GM12878 (cell line): ENCODE measurements at regions of chr5 and their contacts with region 1.

Region 1: DNA sequence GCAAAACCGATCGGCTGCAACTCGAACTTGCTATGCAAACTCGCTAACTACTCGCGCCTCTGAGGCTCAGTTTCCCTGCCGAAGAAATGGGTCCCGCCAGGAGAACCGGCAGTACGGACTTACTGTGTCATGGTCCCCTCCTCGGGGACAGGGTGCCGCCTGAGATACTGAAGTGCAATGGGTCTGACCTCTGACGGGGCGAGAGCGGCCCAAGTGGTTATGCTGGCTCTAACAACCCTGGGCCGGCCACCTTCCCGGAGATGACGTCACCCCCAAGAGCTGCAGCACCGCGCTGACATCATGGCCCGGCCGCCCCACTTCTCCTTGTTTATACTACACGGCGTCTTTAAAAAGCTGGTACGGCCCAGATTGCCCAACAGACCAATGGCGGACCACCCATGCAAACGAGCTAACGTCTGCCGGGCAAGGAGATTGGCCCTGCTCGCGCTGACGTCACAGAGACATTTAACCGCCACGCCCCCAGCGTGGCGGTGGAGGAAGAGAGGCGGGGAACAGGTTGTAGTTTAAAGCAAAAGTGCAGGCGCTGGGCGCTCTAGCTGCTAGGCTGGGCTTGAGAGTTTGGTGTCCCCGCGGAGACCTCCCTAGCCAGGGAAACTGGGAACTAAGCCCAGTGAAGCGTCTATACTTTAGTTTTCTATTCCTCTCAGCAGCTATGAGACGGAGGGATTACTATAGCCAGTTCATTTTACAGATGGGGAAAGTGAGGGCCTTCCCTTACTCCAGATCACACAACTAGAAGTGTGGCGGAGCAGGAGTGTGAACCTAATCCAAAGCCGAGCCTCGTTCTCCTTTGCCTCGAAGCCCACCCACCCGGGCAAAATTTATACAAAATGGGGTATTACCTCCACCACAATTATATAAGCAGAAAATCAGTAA is 654 bp upstream of the RNF44 start:
- DNase-seq: peak; percentile 94
- ATAC-seq: peak; percentile 80
- H3K4me3 ChIP-seq: peak overlapping the region; percentile 99
- H3K27ac ChIP-seq: peak overlapping the region; percentile 95
- H3K4me1 ChIP-seq: peaks cover 38% of the 10 kb centered on the region
- H3K27me3 ChIP-seq: no peaks in the 10 kb centered on the region
- CTCF ChIP-seq: no peak
- EP300 ChIP-seq: no peak
- POLR2A ChIP-seq: no peak
- RAD21 ChIP-seq: no peak

Region 2: GRCh38 chr5:176361437-176362232 is 176.2 kb before region 1 on chr5 and contains the start of gene KIAA1191:
- CTCF ChIA-PET with region 1: interaction called, 4 read pairs
- POLR2A ChIA-PET with region 1: interaction called, 16 read pairs
- RAD21 ChIA-PET with region 1: interaction called, 7 read pairs
- SMC1A ChIA-PET with region 1: no interaction called
- in situ Hi-C with region 1: no loop called
- intact Hi-C with region 1: no loop called
- DNase-seq: peak; percentile 83
- ATAC-seq: peak; percentile 95
- H3K4me3 ChIP-seq: peak within 1 kb of the TSS; percentile 85
- H3K27ac ChIP-seq: peak within 1 kb of the TSS; percentile 81
- H3K4me1 ChIP-seq: no peaks in the 10 kb centered on the region; the same call in 1 of the 2 replicates
- H3K27me3 ChIP-seq: no peaks in the 10 kb centered on the region
- CTCF ChIP-seq: peak; percentile 10 to 51 (median 31); a peak in 3 of 6 replicates
- EP300 ChIP-seq: no peak
- POLR2A ChIP-seq: peak; percentile 100
- RAD21 ChIP-seq: peak; percentile 29; the same call in 1 of the 2 replicates
- polyA plus RNA-seq, gene KIAA1191: 14.9 to 16.3 TPM

Region 3: GRCh38 chr5:176388444-176389134 is 149.3 kb before region 1 on chr5 and contains the starts of genes HIGD2A and NOP16:
- CTCF ChIA-PET with region 1: no interaction called
- POLR2A ChIA-PET with region 1: interaction called, 5 read pairs
- RAD21 ChIA-PET with region 1: interaction called, 6 read pairs
- SMC1A ChIA-PET with region 1: no interaction called
- in situ Hi-C with region 1: no loop called
- intact Hi-C with region 1: loop called (anchors 10 kb)
- DNase-seq: peak; percentile 97
- ATAC-seq: peak; percentile 91
- H3K4me3 ChIP-seq: peak within 1 kb of the TSS; percentile 90
- H3K27ac ChIP-seq: peak within 1 kb of the TSS; percentile 97
- H3K4me1 ChIP-seq: peaks cover 11% of the 10 kb centered on the region
- H3K27me3 ChIP-seq: no peaks in the 10 kb centered on the region
- CTCF ChIP-seq: no peak
- EP300 ChIP-seq: no peak
- POLR2A ChIP-seq: peak; percentile 90
- RAD21 ChIP-seq: no peak
- polyA plus RNA-seq, gene HIGD2A: 196 to 327 TPM
- polyA plus RNA-seq, gene NOP16: 177 to 196 TPM

Region 4: DNA sequence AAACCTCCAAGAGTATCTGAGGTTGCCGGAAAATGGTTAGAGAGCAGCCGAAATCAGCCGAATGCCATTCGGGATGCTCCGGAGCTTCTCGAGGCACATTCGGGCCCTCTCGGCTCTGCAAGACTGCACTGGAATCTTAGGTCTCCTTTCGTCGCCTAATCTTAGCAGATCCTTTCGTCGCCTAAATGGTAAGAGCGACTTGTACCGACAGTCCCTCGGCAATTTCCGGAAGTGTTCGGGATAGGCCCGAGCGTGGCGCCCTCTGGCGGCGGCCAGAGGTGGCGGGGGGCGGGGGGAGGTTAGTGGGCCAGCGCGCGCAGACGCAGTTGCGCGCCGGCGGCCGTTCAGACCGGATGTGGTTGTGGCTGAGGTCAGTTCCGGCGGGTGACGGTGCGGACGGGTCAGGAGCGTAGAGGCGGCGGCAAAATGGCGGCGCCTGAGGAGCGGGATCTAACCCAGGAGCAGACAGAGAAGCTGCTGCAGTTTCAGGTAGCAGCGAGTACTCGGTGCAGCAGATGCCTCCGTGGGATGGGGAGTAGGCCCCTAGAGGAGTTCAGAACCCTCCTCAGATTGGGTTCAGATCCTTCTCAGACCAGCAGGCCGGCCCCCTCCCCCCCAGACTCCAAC is 89.8 kb before region 1 on chr5 and contains the start of gene FAF2:
- CTCF ChIA-PET with region 1: interaction called, 22 read pairs
- POLR2A ChIA-PET with region 1: interaction called, 12 read pairs
- RAD21 ChIA-PET with region 1: interaction called, 9 read pairs
- SMC1A ChIA-PET with region 1: interaction called, 5 read pairs
- in situ Hi-C with region 1: no loop called
- intact Hi-C with region 1: loop called (anchors 5 kb)
- DNase-seq: peak; percentile 96
- ATAC-seq: peak; percentile 98
- H3K4me3 ChIP-seq: peak within 1 kb of the TSS; percentile 96
- H3K27ac ChIP-seq: peak within 1 kb of the TSS; percentile 91
- H3K4me1 ChIP-seq: peaks cover 6% of the 10 kb centered on the region; the same call in 1 of the 2 replicates
- H3K27me3 ChIP-seq: no peaks in the 10 kb centered on the region
- CTCF ChIP-seq: peak; percentile 93 to 99 (median 97); a peak in 5 of 6 replicates
- EP300 ChIP-seq: no peak
- POLR2A ChIP-seq: peak; percentile 97
- RAD21 ChIP-seq: no peak
- polyA plus RNA-seq, gene FAF2: 19.0 to 20.7 TPM

Region 5: GRCh38 chr5:176583081-176583480 is 45.2 kb after region 1 on chr5:
- CTCF ChIA-PET with region 1: no interaction called
- POLR2A ChIA-PET with region 1: no interaction called
- RAD21 ChIA-PET with region 1: no interaction called
- SMC1A ChIA-PET with region 1: no interaction called
- in situ Hi-C with region 1: no loop called
- intact Hi-C with region 1: no loop called
- DNase-seq: no peak
- ATAC-seq: no peak
- H3K4me3 ChIP-seq: no peak overlapping the region
- H3K27ac ChIP-seq: no peak overlapping the region
- H3K4me1 ChIP-seq: no peaks in the 10 kb centered on the region
- H3K27me3 ChIP-seq: no peaks in the 10 kb centered on the region
- CTCF ChIP-seq: no peak
- EP300 ChIP-seq: no peak
- POLR2A ChIP-seq: no peak
- RAD21 ChIP-seq: no peak

Region 6: GRCh38 chr5:176596689-176597416 is 59.0 kb after region 1 on chr5:
- CTCF ChIA-PET with region 1: no interaction called
- POLR2A ChIA-PET with region 1: no interaction called
- RAD21 ChIA-PET with region 1: no interaction called
- SMC1A ChIA-PET with region 1: no interaction called
- in situ Hi-C with region 1: no loop called
- intact Hi-C with region 1: no loop called
- DNase-seq: no peak
- ATAC-seq: peak; percentile 55
- H3K4me3 ChIP-seq: no peak overlapping the region
- H3K27ac ChIP-seq: no peak overlapping the region
- H3K4me1 ChIP-seq: no peaks in the 10 kb centered on the region
- H3K27me3 ChIP-seq: no peaks in the 10 kb centered on the region
- CTCF ChIP-seq: no peak; a peak in 1 of 6 replicates
- EP300 ChIP-seq: no peak
- POLR2A ChIP-seq: no peak
- RAD21 ChIP-seq: no peak

Region 7: DNA sequence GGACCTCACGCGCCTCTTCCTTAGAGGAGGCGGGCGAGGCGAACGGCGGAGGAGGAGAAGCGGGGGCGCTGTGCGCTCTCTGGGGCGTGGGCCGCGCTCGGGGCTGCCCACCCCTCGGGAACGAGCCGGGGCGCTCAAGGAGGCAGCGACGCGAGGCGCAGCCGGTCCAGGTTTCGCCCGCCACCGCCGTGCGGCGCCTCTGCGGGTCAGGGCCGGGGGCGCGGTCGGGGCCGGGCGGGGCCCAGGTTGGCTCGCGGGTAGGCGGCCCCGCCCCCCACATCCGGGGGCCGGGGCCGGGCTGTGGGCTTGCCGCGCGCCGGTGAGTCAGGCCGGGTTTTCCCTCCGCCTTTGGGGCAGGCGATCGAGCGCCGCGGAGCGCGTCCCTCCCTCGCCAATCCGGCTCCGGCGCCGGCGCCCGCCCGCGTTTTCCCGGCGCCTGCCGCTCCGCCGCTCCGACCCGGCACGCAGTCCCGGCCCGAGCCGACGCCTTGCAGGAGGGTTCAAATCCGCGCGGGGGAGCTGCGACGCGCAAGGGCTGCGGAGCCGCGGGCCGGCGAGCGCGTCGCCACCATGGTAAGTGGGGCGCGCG is 1575.4 kb after region 1 on chr5 and contains the start of gene N4BP3:
- CTCF ChIA-PET with region 1: no interaction called
- POLR2A ChIA-PET with region 1: no interaction called
- RAD21 ChIA-PET with region 1: no interaction called
- SMC1A ChIA-PET with region 1: no interaction called
- in situ Hi-C with region 1: no loop called
- intact Hi-C with region 1: loop called (anchors 10 kb)
- DNase-seq: no peak
- ATAC-seq: peak; percentile 70
- H3K4me3 ChIP-seq: peak within 1 kb of the TSS; percentile 88
- H3K27ac ChIP-seq: peak within 1 kb of the TSS; percentile 72
- H3K4me1 ChIP-seq: peaks cover 30% of the 10 kb centered on the region
- H3K27me3 ChIP-seq: no peaks in the 10 kb centered on the region
- CTCF ChIP-seq: peak in 1 of 3 experiments; percentile 17; a peak in 2 of 6 replicates
- EP300 ChIP-seq: peak; percentile 11 to 62; a peak in 1 of 4 replicates
- POLR2A ChIP-seq: no peak
- RAD21 ChIP-seq: no peak
- polyA plus RNA-seq, gene N4BP3: 0.06 to 0.27 TPM